Mammary epithelial cell (primary cell): ENCODE measurements at regions of chr21 and their contacts with region 1.

Region 1: DNA sequence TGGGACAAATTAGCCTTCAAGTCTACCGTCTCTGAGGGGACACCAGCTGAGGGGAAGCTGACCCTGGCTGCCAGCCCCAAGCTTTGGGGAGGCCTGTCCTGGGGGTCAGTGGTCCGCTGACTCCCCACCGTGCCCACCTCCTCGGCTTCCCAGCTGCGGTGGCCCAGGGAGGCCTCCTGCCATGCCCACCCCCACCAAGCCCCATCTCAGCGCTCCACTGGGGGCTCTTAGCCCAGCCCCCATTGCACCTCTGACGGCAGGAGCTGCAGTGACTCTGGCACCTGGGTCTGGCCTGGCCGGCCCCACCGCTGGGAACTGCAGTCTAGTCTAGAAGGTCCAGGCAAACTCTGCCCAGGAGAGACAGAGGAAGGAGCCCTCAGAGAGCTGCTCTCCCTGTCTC is 30.2 kb upstream of the SIM2 start:
- DNase-seq: no peak
- H3K4me3 ChIP-seq: no peak overlapping the region
- H3K27ac ChIP-seq: no peak overlapping the region
- H3K4me1 ChIP-seq: no peaks in the 10 kb centered on the region
- H3K27me3 ChIP-seq: peaks cover 4% of the 10 kb centered on the region
- CTCF ChIP-seq: no peak

Region 2: DNA sequence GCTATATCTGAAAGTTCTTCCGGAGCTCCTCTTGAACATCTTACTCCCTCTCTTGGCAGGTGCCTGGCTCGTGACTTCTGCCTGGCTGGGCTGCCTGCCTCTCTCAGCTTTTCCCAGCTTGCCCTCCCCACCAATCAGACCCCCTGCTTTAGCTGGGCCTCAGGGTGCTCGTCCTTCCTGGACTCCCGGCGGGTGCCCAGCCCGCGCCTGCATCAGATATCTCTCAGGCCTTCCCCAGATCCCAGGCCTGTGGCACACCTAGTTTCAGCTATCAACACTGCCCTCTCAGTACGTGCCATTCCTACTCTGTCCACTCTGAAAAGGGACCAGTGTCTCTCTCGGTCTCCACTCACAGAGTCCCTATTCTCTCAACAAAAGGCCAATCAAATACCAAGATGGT is 92.3 kb before region 1 on chr21:
- CTCF ChIA-PET with region 1: no interaction called
- dilution Hi-C with region 1: loop called (anchors 5 kb)
- in situ Hi-C with region 1: no loop called
- intact Hi-C with region 1: no loop called
- DNase-seq: no peak
- H3K4me3 ChIP-seq: no peak overlapping the region
- H3K27ac ChIP-seq: no peak overlapping the region
- H3K4me1 ChIP-seq: no peaks in the 10 kb centered on the region
- H3K27me3 ChIP-seq: no peaks in the 10 kb centered on the region
- CTCF ChIP-seq: no peak

Region 3: DNA sequence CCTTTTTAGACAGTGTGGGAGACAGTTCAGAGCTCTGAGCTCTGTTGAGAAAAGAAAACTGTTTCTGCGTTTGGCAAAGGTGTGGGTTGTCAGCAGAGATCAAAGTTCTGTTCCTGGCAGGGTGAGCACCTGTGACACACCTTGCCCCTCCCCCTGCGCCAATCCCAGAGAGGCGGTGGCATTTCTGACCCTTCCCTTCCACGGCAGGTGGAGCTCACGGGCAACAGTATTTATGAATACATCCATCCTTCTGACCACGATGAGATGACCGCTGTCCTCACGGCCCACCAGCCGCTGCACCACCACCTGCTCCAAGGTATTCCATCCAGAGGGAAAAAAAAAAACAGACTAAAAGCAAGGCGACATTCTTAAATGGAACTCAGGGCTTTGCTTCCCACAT is 50.9 kb after region 1 on chr21:
- CTCF ChIA-PET with region 1: no interaction called
- dilution Hi-C with region 1: loop called (anchors 5 kb)
- in situ Hi-C with region 1: no loop called
- intact Hi-C with region 1: no loop called
- DNase-seq: no peak
- H3K4me3 ChIP-seq: no peak overlapping the region
- H3K27ac ChIP-seq: peak overlapping the region; percentile 48
- H3K4me1 ChIP-seq: peaks cover 12% of the 10 kb centered on the region
- H3K27me3 ChIP-seq: no peaks in the 10 kb centered on the region
- CTCF ChIP-seq: no peak

Region 4: GRCh38 chr21:36759348-36760083 is 90.8 kb after region 1 on chr21:
- CTCF ChIA-PET with region 1: no interaction called
- dilution Hi-C with region 1: loop called (anchors 5 kb)
- in situ Hi-C with region 1: no loop called
- intact Hi-C with region 1: no loop called
- DNase-seq: no peak
- H3K4me3 ChIP-seq: no peak overlapping the region
- H3K27ac ChIP-seq: no peak overlapping the region
- H3K4me1 ChIP-seq: no peaks in the 10 kb centered on the region
- H3K27me3 ChIP-seq: no peaks in the 10 kb centered on the region
- CTCF ChIP-seq: no peak